ENCODE measurements at regions of chr17 and their contacts with region 1.

Region 1: GRCh38 chr17:48724251-48725003 is 1.4 kb downstream of the PRAC2 start:
- DNase-seq: no peak
- H3K4me3 ChIP-seq: no peak overlapping the region
- CTCF ChIP-seq: peak; percentile 83

Region 2: DNA sequence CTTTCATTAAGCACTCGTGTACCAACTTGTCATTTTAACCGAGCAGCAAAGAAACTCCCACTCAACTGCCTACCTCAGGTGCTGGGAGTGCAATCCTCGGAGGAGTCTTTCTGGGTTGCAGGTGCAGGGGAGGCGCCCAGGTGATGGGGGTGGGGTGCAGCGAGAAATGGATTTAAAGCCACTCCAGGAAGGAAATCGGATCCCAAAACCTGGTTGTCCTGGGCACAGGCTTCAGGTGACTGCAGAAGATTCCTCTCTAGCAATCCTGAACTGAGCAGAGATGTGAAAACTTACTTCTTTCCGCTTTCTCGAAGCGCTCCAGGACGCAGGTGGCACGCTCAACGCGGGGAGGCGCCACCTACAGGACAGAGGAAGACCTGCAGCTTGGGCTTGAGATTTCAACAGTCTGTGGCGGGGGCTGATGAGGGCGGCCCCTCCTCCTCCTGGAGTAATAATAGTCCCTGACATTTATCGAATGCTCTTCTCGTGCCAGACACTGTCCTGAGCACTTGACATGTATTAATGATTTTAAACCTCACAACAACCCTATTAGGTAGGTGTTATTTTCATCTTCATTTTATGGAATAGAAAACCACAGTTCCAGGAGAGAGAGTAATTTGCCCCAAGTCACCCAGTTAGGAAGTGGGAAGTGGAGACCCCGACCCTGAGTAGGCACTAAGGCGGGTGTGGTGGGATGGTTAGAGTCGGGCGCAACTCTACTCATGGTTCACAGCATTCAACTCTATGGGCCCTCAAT is 267.2 kb before region 1 on chr17:
- CTCF ChIA-PET with region 1: no interaction called
- POLR2A ChIA-PET with region 1: no interaction called
- DNase-seq: no peak
- H3K4me3 ChIP-seq: no peak overlapping the region
- CTCF ChIP-seq: peak; percentile 97

Region 3: GRCh38 chr17:48711102-48711501 is 13.3 kb before region 1 on chr17:
- CTCF ChIA-PET with region 1: interaction called, 26 read pairs
- POLR2A ChIA-PET with region 1: no interaction called
- DNase-seq: no peak
- H3K4me3 ChIP-seq: no peak overlapping the region
- CTCF ChIP-seq: no peak

Region 4: DNA sequence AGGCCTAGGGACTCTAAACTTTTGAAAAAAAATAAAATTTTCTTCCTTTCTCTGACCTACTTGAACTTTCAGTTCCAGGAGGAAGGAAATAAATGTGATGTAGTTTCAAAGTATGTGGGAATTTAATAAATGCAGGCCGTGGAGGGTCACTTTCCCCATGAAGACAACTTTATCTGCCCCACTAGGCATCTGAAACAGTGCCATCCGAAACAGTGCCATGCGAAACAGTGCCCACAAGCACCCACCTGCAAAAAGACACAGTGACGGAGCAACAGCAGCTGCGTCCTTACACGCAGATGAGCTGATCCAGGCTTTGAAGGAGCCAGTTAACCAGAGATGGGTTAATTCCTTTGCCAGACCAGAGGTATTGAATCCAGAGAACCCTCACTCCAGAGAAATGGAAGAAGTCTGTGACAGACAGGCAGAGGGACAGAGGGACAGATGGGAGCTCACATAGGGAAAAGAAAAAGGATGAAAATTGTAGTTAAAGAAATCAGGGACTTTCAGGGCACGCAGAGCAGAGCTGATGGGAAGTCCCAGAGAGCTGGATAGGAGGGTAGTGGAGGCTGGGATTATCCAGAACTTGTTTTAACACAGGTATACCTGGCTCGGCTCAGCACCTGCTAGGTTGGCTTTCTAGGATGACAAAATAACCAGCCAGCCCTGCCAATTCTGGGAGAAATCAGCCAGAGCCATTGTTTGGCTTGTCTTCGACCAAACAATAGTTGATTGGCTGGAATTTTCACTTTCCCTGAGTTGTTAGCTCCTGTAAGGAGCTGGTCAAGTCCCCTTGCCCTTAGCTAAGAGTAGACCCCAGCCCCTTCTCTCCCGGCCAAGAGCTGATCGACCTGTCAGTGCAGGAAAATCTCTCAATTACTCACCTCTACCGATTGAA is 21.2 kb after region 1 on chr17:
- CTCF ChIA-PET with region 1: interaction called, 22 read pairs
- POLR2A ChIA-PET with region 1: no interaction called
- DNase-seq: no peak
- H3K4me3 ChIP-seq: no peak overlapping the region
- CTCF ChIP-seq: no peak

Region 5: DNA sequence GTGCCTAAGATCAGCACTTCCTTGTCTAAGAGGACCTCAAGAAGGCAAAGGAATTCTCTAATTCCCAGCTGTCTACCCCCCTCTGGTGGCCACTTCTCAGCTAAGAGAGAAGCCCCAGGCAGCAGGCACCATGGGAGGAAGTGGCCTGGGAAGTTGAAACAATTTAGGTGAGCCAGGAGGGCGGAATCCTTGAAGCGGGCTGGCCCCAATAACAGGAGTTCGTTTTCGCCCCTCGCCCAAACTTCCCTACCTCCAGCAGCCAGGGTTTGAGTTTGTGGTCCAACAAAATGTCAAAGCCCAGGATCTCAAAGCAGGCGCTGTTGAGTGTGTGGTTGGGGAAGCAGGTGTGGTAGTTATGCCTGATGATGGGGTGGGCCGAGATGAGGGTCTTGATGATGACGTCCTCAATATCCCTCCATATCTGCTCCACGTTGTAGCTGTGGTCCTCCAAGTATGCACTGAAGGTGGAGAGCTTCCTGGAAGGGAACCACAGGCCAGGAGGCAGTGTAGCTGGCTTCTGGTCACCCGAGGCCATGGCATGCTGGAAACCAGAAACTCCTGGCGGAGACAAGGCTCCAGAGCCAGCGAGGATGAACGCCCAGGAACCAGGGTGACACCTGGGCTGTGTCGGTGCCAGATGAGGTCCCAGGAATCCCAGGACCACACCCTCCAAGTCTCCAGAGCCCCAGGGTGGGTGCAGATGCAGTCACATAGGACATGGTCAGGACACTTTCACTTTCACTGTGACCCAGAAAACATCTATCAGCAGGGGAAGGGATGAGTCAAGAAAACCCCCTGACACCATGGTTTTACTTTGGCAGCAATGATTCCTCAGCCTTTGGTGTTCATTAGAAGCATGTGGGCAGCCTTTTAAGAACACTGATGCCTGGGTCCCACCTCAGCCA is 67.0 kb after region 1 on chr17:
- CTCF ChIA-PET with region 1: interaction called, 353 read pairs
- POLR2A ChIA-PET with region 1: interaction called, 3 read pairs
- DNase-seq: peak; percentile 45
- H3K4me3 ChIP-seq: no peak overlapping the region
- CTCF ChIP-seq: peak; percentile 82

Region 6: GRCh38 chr17:48816774-48817590 is 92.6 kb after region 1 on chr17 and contains the start of gene TTLL6:
- CTCF ChIA-PET with region 1: interaction called, 17 read pairs
- POLR2A ChIA-PET with region 1: no interaction called
- DNase-seq: no peak
- H3K4me3 ChIP-seq: peak within 1 kb of the TSS; percentile 45
- CTCF ChIP-seq: no peak